ENCODE measurements at regions of chr2 and their contacts with region 1.

Region 1: GRCh38 chr2:65220432-65221131 is 7.0 kb upstream of the ACTR2 start:
- DNase-seq: no peak
- H3K4me3 ChIP-seq: no peak overlapping the region
- H3K27ac ChIP-seq: no peak overlapping the region
- H3K27me3 ChIP-seq: no peaks in the 10 kb centered on the region
- CTCF ChIP-seq: no peak

Region 2: GRCh38 chr2:63530880-63531279 is 1689.7 kb before region 1 on chr2:
- CTCF ChIA-PET with region 1: no interaction called
- POLR2A ChIA-PET with region 1: interaction called, 13 read pairs
- DNase-seq: no peak
- H3K4me3 ChIP-seq: no peak overlapping the region
- H3K27ac ChIP-seq: no peak overlapping the region
- H3K27me3 ChIP-seq: no peaks in the 10 kb centered on the region
- CTCF ChIP-seq: no peak

Region 3: GRCh38 chr2:65316072-65316471 is 95.5 kb after region 1 on chr2:
- CTCF ChIA-PET with region 1: no interaction called
- POLR2A ChIA-PET with region 1: no interaction called
- DNase-seq: peak; percentile 68
- H3K4me3 ChIP-seq: no peak overlapping the region
- H3K27ac ChIP-seq: peak overlapping the region; percentile 86
- H3K27me3 ChIP-seq: no peaks in the 10 kb centered on the region
- CTCF ChIP-seq: no peak